Activated CD4-positive, alpha-beta T cell treated with anti-CD3 and anti-CD28 coated beads for 36 hours (primary cell): ENCODE measurements at regions of chr14 and their contacts with region 1.

Region 1: DNA sequence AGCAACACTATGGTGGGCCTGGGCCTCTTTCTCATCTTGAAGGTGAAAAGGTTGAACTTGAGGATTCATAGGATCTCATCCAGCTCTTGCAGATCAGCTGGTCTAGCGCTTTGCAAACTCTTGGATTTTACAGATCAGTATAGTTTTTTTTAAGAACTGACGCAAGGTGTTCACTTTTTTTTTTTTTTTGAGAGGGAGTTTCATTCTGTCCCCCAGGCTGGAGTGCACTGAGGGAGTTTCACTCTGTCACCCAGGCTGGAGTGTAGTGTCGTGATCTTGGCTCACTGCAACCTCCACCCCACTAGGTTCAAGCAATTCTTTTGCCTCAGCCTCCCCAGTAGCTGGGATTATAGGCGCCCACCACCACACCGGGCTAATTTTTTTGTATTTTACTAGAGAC is 20.4 kb upstream of the LGMN start:
- DNase-seq: no peak
- ATAC-seq: no peak
- H3K4me3 Mint-ChIP-seq: no peak overlapping the region
- H3K27ac Mint-ChIP-seq: no peak overlapping the region
- H3K4me1 Mint-ChIP-seq: peaks cover 16% of the 10 kb centered on the region
- H3K27me3 Mint-ChIP-seq: no peaks in the 10 kb centered on the region

Region 2: GRCh38 chr14:92728759-92729370 is 39.9 kb before region 1 on chr14:
- CTCF ChIA-PET with region 1: no interaction called
- POLR2A ChIA-PET with region 1: interaction called, 6 read pairs
- intact Hi-C with region 1: loop called (anchors 2 kb)
- DNase-seq: peak; percentile 84
- ATAC-seq: peak; percentile 97
- H3K4me3 Mint-ChIP-seq: no peak overlapping the region
- H3K27ac Mint-ChIP-seq: no peak overlapping the region
- H3K4me1 Mint-ChIP-seq: peaks cover 20% of the 10 kb centered on the region
- H3K27me3 Mint-ChIP-seq: peaks cover 5% of the 10 kb centered on the region

Region 3: DNA sequence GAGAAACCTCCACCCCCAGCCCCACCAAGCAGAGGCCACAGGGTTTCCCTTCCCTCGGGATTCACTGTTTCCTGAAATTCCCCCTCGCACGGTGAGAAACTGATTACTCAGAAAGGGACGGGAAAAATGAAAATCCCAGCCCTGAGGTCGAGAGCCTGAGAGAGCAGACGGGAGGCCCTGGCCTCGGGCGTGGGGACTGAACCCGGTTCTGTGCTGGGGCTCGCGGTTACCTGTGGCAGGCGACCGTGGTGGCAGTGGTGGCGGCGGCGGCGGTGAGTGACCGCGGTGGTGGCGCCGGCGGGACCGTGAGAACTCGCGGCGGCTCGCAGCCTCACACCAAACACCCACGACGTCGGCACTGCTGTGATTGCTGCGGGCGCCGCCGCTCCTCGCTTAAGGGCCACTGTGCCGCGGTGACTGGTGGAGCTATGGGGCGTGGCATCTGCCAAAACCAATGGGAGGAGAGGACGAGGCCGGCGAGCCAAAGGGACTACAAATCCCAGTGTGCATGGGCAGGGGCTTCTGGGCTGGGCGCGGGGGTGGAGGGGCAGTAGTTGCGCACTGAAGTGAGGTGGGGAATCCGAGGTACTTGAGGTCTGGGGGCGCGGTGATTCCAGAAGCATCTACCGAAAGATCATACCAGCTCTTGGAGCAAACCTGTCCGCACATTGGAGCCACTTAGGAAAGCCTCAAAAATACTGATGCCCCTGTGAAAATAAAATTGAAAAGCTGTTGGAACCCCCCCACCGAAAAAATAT is 20.4 kb before region 1 on chr14 and contains the start of gene LGMN:
- CTCF ChIA-PET with region 1: interaction called, 4 read pairs
- POLR2A ChIA-PET with region 1: no interaction called
- intact Hi-C with region 1: loop called in 1 of 2 experiments (anchors 2 kb)
- DNase-seq: peak; percentile 90
- ATAC-seq: peak; percentile 97
- H3K4me3 Mint-ChIP-seq: peak within 1 kb of the TSS; percentile 75
- H3K27ac Mint-ChIP-seq: peak within 1 kb of the TSS; percentile 45
- H3K4me1 Mint-ChIP-seq: peaks cover 29% of the 10 kb centered on the region
- H3K27me3 Mint-ChIP-seq: peaks cover 23% of the 10 kb centered on the region
- total RNA-seq, gene LGMN: 3.2 to 5.6 TPM

Region 4: DNA sequence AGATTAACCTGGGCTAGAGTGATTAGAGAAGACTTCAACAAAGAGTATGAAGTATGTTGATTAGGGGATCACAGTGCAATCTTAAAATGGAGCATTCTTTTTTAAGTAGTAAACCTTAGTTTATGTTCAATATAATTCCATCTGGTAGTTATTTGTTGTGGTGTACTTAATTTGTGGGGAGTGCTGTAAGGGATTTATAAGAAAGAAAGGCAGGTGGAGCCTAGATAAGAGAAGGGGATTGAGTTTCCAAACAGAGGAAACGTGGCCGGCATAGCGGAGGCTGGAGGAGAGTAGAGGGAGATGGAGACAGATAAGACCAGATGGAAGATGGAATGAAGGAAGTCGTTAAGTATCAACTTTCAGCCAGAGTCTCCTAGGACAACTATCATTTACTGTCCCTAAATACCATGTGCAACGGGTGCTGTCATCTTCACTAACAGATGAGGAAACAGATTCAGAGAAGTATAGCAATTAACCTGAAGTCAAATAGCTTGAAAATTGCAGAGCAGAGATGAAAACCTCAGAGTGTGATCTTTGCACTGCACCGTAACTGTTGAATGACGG is 63.4 kb after region 1 on chr14:
- CTCF ChIA-PET with region 1: no interaction called
- POLR2A ChIA-PET with region 1: no interaction called
- intact Hi-C with region 1: no loop called
- DNase-seq: no peak
- ATAC-seq: no peak
- H3K4me3 Mint-ChIP-seq: no peak overlapping the region
- H3K27ac Mint-ChIP-seq: no peak overlapping the region
- H3K4me1 Mint-ChIP-seq: no peaks in the 10 kb centered on the region
- H3K27me3 Mint-ChIP-seq: no peaks in the 10 kb centered on the region